WTC11 (cell line): ENCODE measurements at regions of chr19 and their contacts with region 1.

Region 1: GRCh38 chr19:51660975-51661600 is 14.5 kb upstream of the SIGLEC14 start:
- DNase-seq: peak; percentile 88
- ATAC-seq: peak; percentile 72
- H3K4me3 Mint-ChIP-seq: no peak overlapping the region
- H3K27ac Mint-ChIP-seq: no peak overlapping the region
- H3K4me1 Mint-ChIP-seq: peaks cover 6% of the 10 kb centered on the region
- H3K27me3 Mint-ChIP-seq: peaks cover 26% of the 10 kb centered on the region
- CTCF ChIP-seq: peak; percentile 46

Region 2: DNA sequence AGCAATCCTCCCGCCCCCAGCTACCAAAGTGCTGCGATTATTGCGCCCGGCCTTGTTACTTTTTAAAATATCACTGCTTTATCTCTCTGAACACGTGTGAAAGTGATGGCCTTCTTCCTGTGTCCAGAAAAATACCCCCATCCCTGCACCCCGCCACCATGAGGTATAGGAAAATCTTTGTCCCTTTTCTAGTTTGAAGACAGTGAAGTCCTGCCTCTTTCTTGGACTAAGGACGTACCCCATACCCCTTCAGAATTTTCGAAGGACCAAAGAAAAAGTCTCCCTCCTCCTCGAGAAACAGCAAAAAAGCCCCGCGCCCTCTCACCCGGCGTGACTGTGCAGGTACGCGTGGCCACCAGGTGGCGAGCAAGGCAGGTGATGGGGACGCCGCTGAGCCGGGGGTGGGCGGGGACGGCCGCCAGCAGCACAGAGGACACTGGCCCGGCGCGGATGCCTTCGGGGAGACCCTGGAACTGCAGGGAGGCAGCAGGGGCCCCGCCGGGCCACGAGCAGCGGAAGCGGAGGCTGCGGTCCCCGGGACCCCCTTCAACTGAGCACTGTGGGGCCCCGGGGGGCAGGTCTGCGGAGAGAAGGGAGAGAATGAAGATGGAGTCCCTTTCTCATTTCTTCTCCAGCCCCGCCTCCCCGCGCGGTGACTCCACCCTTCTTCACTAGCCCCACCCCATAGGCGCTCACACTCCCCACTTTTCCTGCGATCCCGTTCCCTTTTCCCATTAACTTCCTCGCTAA is 322.4 kb before region 1 on chr19:
- CTCF ChIA-PET with region 1: interaction called, 11 read pairs
- POLR2A ChIA-PET with region 1: no interaction called
- DNase-seq: peak; percentile 91
- ATAC-seq: peak; percentile 50
- H3K4me3 Mint-ChIP-seq: peak overlapping the region; percentile 89
- H3K27ac Mint-ChIP-seq: peak overlapping the region; percentile 98
- H3K4me1 Mint-ChIP-seq: peaks cover 32% of the 10 kb centered on the region
- H3K27me3 Mint-ChIP-seq: peaks cover 26% of the 10 kb centered on the region
- CTCF ChIP-seq: peak; percentile 69

Region 3: DNA sequence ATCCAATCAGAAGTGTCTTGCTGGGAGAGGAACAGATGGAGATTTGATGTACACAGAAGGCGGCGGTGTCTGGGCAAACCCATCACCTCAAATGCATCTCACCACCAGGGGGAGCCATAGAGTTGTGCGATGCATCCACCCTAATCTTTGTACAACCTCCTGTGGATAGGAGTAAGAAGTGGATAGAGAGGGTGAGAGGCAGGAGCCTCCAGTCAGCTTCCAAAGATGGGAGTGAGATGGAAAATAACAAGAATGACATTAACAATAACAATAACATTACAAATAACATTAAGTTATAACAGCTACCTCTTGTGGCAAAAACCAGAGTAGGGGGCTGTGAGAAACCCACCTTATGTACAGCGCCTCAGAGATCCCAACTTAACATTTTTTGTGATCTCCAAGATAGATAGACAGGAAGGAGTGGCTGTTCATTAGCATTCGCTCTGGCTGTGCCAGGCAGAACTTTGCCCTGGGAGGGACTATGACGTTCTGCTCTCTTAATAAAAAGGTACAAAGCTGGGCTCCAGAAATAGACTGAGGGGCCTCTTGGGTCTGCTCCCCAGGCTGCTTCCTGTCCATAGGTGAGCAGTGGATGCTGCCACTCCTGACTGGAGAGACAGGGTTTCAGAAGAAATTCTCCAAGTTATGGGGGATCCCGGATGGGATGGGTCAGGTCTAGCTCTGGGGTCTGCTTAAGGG is 187.9 kb before region 1 on chr19:
- CTCF ChIA-PET with region 1: interaction called, 65 read pairs
- POLR2A ChIA-PET with region 1: no interaction called
- DNase-seq: peak; percentile 87
- ATAC-seq: peak; percentile 83
- H3K4me3 Mint-ChIP-seq: no peak overlapping the region
- H3K27ac Mint-ChIP-seq: no peak overlapping the region
- H3K4me1 Mint-ChIP-seq: no peaks in the 10 kb centered on the region
- H3K27me3 Mint-ChIP-seq: peaks cover 30% of the 10 kb centered on the region
- CTCF ChIP-seq: peak; percentile 89

Region 4: GRCh38 chr19:51593969-51594773 is 66.9 kb before region 1 on chr19:
- CTCF ChIA-PET with region 1: interaction called, 13 read pairs
- POLR2A ChIA-PET with region 1: no interaction called
- DNase-seq: peak; percentile 99
- ATAC-seq: peak; percentile 99
- H3K4me3 Mint-ChIP-seq: peak overlapping the region; percentile 94
- H3K27ac Mint-ChIP-seq: peak overlapping the region; percentile 15; the same call in 1 of the 2 replicates
- H3K4me1 Mint-ChIP-seq: peaks cover 12% of the 10 kb centered on the region
- H3K27me3 Mint-ChIP-seq: peaks cover 25% of the 10 kb centered on the region
- CTCF ChIP-seq: no peak

Region 5: DNA sequence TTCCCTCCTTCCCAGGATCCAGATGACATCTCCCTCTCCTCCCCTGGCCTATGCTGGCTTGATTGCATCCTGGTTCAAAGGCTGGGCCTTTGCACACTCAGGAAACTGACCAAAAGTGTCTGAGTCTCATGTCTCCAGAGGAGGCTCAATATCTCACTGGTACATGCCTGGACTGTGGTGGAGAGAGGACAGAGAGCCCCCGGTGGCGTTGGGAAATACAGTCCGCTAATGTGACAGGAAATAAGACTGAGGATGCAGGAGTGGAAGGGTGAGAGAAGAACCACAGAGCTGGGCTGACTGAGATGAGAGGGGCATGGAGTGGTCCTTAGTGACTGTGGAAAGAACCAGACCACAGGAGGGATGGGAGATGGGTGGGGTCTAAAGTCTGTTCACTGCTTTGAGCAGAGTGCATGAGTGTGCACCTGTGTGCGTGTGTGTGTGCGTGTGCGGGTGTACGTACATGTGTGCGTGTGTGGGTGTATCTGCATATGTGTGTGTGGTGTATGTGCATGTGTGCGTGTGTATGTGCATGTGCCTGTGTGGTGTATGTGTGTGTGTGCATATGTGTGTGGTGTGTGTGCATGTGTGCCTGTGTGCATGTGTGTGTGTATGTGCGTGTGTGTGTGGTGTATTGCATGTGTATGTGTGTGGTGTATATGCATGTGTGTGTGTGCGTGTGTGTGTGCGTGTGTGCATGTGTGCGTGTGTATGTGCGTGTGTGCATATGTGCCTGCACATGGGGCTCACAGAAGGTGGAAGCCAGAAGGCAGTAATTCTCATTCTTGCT is 32.7 kb before region 1 on chr19:
- CTCF ChIA-PET with region 1: interaction called, 15 read pairs
- POLR2A ChIA-PET with region 1: no interaction called
- DNase-seq: no peak
- ATAC-seq: no peak
- H3K4me3 Mint-ChIP-seq: no peak overlapping the region
- H3K27ac Mint-ChIP-seq: no peak overlapping the region
- H3K4me1 Mint-ChIP-seq: peaks cover 3% of the 10 kb centered on the region; the same call in 1 of the 2 replicates
- H3K27me3 Mint-ChIP-seq: peaks cover 9% of the 10 kb centered on the region
- CTCF ChIP-seq: no peak

Region 6: DNA sequence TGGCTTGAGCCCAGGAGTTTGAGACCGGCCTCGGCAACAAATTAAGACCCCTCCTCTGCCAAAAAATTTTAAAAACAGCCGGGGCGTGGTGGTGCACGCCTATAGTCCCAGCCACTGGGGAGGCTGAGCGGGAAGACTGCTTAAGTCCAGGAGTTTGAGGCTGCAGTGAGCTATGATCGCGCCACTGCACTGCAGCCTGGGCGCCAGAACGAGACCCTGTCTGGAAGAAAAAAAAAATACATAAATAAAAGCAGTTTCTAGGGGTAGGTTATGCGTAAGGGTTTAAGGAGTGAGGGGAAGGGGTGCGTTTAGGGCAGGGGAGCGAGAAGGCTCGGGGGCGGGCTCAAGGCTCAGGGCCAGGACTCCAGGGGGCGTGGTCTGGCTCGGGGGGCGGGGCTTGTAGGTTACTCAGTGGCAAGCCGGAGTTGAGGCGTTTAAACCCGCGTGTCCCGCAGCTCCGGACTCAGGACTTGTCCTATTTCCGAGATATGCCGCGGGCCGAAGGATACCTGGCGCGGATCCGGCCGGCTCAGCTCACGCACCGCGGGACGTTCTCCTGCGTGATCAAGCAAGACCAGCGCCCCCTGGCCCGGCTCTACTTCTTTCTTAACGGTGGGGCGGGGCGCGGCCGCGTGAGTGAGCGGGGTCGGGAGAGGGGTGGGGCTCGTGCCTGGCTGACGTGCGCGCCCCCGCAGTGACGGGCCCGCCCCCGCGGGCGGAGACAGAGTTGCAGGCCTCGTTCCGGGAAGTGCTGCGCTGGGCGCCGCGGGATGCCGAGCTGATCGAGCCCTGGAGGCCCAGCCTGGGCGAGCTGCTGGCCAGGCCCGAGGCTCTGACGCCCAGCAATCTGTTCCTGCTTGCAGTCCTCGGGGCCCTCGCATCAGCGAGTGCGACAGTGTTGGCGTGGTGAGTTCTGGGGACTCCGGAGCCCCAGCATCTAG is 42.8 kb after region 1 on chr19:
- CTCF ChIA-PET with region 1: interaction called, 19 read pairs
- POLR2A ChIA-PET with region 1: no interaction called
- DNase-seq: peak; percentile 97
- ATAC-seq: peak; percentile 54
- H3K4me3 Mint-ChIP-seq: peak overlapping the region; percentile 94
- H3K27ac Mint-ChIP-seq: no peak overlapping the region; the same call in 1 of the 2 replicates
- H3K4me1 Mint-ChIP-seq: peaks cover 29% of the 10 kb centered on the region
- H3K27me3 Mint-ChIP-seq: peaks cover 8% of the 10 kb centered on the region
- CTCF ChIP-seq: no peak